Activated CD4-positive, alpha-beta T cell treated with anti-CD3 and anti-CD28 coated beads for 36 hours (primary cell): ENCODE measurements at regions of chr9 and their contacts with region 1.

Region 1: GRCh38 chr9:133133681-133134418 is 12.8 kb upstream of the RALGDS start:
- DNase-seq: peak; percentile 95
- ATAC-seq: peak; percentile 84
- H3K4me3 Mint-ChIP-seq: peak overlapping the region; percentile 41
- H3K27ac Mint-ChIP-seq: peak overlapping the region; percentile 98
- H3K4me1 Mint-ChIP-seq: peaks cover 75% of the 10 kb centered on the region
- H3K27me3 Mint-ChIP-seq: no peaks in the 10 kb centered on the region

Region 2: DNA sequence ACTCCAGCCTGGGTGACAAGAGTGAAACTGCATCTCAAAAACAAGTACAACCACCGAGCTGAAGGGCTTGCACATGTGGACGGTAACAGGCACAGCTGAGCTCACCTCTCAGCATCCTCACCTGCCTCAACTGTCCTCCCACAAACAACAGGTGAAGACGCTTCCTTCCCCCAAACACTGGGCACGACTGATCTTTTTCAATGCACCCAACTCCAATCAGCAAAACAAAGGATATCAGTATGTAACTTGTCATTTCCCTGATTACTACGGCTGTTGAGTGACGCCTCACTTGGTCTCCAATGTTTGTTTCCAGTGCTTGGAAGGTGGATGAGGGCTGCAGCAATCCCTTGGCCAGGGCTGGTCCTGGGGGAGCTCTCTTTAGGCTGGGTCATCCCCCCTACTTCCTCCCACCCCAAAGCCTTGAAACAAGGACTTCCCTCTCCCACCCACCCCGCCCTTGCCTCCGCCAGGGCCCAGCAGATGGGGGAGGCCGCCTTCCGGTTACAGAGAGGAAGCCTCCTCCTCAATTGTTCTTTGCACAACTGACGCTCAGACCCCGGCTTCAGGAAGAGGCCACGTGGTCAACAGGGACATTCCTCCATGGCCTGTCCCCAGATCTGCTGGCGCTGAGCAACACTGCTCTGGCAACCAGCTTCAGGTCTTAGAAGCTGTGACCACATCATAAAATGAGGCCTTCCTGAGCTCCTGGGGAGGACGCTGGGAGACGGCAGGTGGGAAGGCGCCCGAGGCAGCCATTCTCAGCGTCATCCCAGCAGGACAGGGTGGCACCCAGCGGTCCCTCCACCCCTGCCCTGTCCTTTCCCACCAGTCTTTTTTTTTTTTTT is 1863.5 kb before region 1 on chr9:
- CTCF ChIA-PET with region 1: no interaction called
- POLR2A ChIA-PET with region 1: no interaction called
- intact Hi-C with region 1: loop called in 1 of 2 experiments (anchors 10 kb)
- DNase-seq: peak; percentile 77
- ATAC-seq: peak; percentile 13
- H3K4me3 Mint-ChIP-seq: peak overlapping the region; percentile 90
- H3K27ac Mint-ChIP-seq: peak overlapping the region; percentile 100
- H3K4me1 Mint-ChIP-seq: peaks cover 58% of the 10 kb centered on the region
- H3K27me3 Mint-ChIP-seq: no peaks in the 10 kb centered on the region

Region 3: DNA sequence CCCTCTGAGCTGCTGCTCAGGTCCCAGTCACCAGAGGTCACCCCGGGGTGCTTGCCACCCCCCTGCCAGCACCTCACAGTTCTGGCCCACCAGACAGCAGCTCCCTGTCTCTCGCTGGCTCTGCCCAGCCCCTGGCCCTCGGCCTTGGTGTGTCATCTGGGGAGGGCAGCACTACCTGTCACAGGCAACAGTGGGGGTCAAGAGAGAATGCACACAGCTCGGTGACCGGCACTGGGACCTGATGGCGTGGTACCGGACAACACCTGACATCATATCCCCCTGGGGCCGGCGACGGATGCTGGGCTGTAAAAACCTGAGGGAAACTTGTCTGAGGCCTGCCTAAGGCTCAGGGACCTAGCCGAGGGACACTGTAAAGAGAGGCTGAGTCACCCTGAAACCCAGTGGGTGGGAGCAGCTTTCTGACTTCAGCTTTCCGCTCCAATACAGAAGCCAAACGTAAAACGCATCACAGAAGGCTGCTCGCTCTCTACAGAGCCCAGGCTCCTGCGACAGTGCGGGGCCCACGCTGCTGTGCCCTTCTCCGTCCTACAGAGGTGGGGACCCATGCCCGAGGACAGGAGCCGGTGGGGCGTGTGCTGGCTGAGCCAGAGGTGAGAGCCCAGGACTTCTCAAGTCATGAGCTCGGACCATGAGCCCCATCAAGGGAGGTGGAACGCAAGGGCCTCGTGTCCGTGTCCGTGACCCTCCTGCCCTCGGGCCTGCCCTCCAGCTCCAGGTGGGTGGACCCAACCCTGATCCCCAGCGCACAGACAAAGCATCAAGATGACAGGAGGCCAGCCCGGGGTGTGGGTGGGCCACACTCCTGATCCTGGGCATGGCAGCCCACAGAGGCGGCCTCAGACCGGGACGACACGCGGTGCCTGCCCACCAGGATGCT is 18.2 kb before region 1 on chr9:
- CTCF ChIA-PET with region 1: interaction called, 7 read pairs
- POLR2A ChIA-PET with region 1: interaction called, 11 read pairs
- intact Hi-C with region 1: loop called (anchors 1 to 2 kb)
- DNase-seq: peak; percentile 89
- ATAC-seq: peak; percentile 94
- H3K4me3 Mint-ChIP-seq: peak overlapping the region; percentile 50
- H3K27ac Mint-ChIP-seq: peak overlapping the region; percentile 84
- H3K4me1 Mint-ChIP-seq: peaks cover 57% of the 10 kb centered on the region
- H3K27me3 Mint-ChIP-seq: no peaks in the 10 kb centered on the region